Uterus (tissue), 4 donors: ENCODE measurements at regions of chr5 and their contacts with region 1.

Region 1: GRCh38 chr5:147628058-147628895 is 118.4 kb upstream of the DPYSL3 start:
- DNase-seq: peak in 1 of 2 donors; percentile 46
- H3K4me3 ChIP-seq: no peak overlapping the region
- H3K27ac ChIP-seq: no peak overlapping the region
- H3K4me1 ChIP-seq: no peaks in the 10 kb centered on the region
- H3K27me3 ChIP-seq: no peaks in the 10 kb centered on the region
- CTCF ChIP-seq: peak; percentile 67 to 70 (median 70)
- POLR2A ChIP-seq: no peak

Region 2: GRCh38 chr5:147530530-147531389 is 97.5 kb before region 1 on chr5:
- intact Hi-C with region 1: no loop called
- DNase-seq: no peak
- H3K4me3 ChIP-seq: no peak overlapping the region
- H3K27ac ChIP-seq: no peak overlapping the region
- H3K4me1 ChIP-seq: peaks cover 0 to 8% of the 10 kb centered on the region in 2 donors
- H3K27me3 ChIP-seq: no peaks in the 10 kb centered on the region
- CTCF ChIP-seq: no peak
- POLR2A ChIP-seq: no peak

Region 3: DNA sequence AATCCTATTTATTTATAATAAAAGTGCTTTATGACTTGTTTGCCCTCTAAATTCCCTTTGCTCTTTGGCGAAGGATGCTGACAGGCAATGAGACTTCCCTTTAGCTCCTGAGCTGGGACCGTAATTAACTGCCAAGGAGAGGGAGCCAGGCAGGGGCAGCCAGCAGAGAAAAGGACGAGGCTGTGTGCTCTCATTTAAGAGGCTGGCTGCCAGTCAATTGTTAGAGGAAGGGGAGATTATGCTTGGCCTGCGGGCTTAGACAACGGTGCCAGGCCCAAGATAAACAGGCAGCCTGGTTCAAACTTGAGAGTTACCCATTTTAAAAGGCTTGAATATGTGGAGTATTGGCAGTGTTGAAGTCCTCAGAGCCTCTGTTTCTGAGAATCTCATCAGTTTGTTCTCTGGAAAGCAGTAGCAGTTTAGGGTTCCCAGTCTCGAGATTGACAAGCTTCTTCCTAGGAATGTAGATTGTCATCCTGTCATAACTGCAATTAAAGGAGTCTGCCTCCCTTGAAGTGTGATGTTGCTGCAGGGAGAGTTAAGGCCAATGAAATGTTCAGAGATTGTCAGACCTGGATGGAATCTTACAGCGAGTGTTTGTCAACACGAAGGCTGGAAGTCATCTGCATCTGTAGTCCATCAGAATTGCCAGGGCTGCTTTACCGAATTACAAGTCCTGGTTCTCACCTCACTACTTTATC is 41.0 kb after region 1 on chr5:
- intact Hi-C with region 1: no loop called
- DNase-seq: no peak
- H3K4me3 ChIP-seq: no peak overlapping the region
- H3K27ac ChIP-seq: no peak overlapping the region
- H3K4me1 ChIP-seq: no peaks in the 10 kb centered on the region
- H3K27me3 ChIP-seq: no peaks in the 10 kb centered on the region
- CTCF ChIP-seq: no peak
- POLR2A ChIP-seq: no peak

Region 4: DNA sequence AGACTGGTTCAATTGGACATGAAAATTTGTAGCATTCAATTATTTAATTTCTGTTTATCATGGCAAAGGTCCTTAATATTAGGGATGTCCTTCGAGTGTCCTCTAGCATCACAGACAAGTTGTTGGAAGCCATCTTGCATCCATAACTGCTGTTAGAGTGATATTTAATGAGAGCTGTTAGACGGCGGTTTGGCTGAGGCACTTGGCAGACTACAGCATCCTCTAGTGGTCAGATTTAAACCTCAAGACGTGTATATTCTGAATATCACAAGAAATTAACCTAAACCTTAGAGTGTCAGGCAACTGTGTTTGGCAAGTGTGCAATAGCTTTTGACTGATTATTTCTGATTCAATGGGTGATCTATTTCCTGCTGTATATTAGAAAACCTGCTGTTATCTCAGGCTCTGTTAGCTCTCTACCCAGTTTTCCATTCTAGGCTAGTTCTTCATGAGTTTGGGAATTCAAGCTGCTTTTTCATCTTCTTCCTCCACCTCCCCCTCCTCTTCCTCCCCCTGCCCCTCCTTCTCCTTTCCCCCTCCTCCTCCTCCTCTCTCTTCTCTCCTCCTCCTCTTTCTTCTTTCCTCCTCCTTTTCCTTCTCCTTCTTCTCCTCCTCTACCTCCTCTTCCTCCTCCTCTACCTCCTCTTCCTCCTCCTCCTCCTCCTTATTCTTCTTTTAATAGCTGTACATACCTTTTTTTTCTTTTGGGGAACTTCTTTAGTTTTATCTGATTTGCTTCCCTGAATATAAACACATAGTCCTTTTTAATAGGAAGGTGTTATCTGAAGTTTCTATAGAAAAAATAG is 194.6 kb after region 1 on chr5:
- intact Hi-C with region 1: loop called (anchors 10 kb)
- DNase-seq: peak in 1 of 2 donors; percentile 29
- H3K4me3 ChIP-seq: no peak overlapping the region
- H3K27ac ChIP-seq: no peak overlapping the region
- H3K4me1 ChIP-seq: no peaks in the 10 kb centered on the region
- H3K27me3 ChIP-seq: no peaks in the 10 kb centered on the region
- CTCF ChIP-seq: peak; percentile 68 to 90 (median 78)
- POLR2A ChIP-seq: no peak